GM12878 (cell line): ENCODE measurements at regions of chr10 and their contacts with region 1.

Region 1: DNA sequence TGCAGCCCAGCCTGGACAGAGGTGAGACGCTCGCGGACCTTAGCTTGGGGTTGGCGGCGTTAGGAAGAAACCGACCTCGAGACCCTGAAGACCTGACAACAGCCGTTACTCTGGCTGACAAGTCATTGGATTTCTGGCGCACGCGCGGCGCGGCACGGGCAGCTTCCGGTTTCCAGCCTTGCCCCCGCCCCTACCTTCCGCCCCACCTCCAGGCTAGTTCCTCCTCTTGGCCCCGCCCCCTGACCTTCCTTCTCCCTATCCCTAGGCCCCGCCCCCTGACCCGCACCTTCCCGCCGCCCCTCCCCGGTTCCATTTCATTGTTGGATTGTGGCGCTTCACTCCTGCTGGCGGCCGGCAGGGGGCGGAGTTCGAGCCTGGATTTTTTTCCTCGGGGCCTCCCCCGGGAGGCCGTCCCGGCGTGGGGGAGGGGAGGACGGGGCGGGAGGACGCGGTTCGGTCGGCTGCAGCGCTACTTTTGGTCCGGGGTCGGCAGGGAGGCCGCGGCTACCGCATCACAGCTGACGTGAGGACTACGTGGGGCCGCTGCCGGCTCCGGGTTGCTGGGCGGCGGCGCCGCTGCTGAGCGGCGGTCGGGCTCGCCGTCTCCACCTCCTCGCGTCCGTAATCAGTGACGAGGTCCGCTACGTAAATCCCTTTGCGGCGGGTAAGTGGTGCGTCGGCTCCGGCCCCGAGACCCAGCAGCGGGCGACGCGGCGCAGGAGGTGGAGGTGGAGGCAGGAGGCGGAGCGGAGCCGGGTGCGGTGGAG is at the start of gene CREM:
- DNase-seq: peak; percentile 79
- ATAC-seq: peak; percentile 78
- H3K4me3 ChIP-seq: peak within 1 kb of the TSS; percentile 81
- H3K27ac ChIP-seq: peak within 1 kb of the TSS; percentile 99
- H3K4me1 ChIP-seq: peaks cover 3% of the 10 kb centered on the region; the same call in 1 of the 2 replicates
- H3K27me3 ChIP-seq: no peaks in the 10 kb centered on the region
- CTCF ChIP-seq: peak; percentile 60 to 84 (median 81)
- EP300 ChIP-seq: peak; percentile 90 to 92; a peak in 3 of 4 replicates
- POLR2A ChIP-seq: peak; percentile 97
- RAD21 ChIP-seq: peak; percentile 91
- polyA plus RNA-seq, gene CREM: 64.2 to 70.7 TPM

Region 2: GRCh38 chr10:35184527-35185171 is 57.9 kb after region 1 on chr10:
- CTCF ChIA-PET with region 1: interaction called, 27 read pairs
- POLR2A ChIA-PET with region 1: interaction called, 4 read pairs
- RAD21 ChIA-PET with region 1: interaction called, 15 read pairs
- SMC1A ChIA-PET with region 1: interaction called, 8 read pairs
- in situ Hi-C with region 1: no loop called
- intact Hi-C with region 1: loop called (anchors 2 kb)
- DNase-seq: no peak
- ATAC-seq: peak; percentile 74
- H3K4me3 ChIP-seq: no peak overlapping the region; the same call in 1 of the 2 replicates
- H3K27ac ChIP-seq: peak overlapping the region; percentile 74
- H3K4me1 ChIP-seq: peaks cover 22% of the 10 kb centered on the region
- H3K27me3 ChIP-seq: no peaks in the 10 kb centered on the region
- CTCF ChIP-seq: no peak
- EP300 ChIP-seq: peak in 1 of 2 experiments; percentile 51; a peak in 1 of 4 replicates
- POLR2A ChIP-seq: no peak
- RAD21 ChIP-seq: no peak

Region 3: GRCh38 chr10:35218339-35218955 is 91.7 kb after region 1 on chr10:
- CTCF ChIA-PET with region 1: interaction called, 378 read pairs
- POLR2A ChIA-PET with region 1: interaction called, 10 read pairs
- RAD21 ChIA-PET with region 1: interaction called, 137 read pairs
- SMC1A ChIA-PET with region 1: interaction called, 281 read pairs
- in situ Hi-C with region 1: loop called (anchors 5 kb)
- intact Hi-C with region 1: loop called (anchors 1 kb)
- DNase-seq: peak; percentile 59
- ATAC-seq: peak; percentile 85
- H3K4me3 ChIP-seq: no peak overlapping the region
- H3K27ac ChIP-seq: no peak overlapping the region
- H3K4me1 ChIP-seq: peaks cover 12% of the 10 kb centered on the region
- H3K27me3 ChIP-seq: no peaks in the 10 kb centered on the region
- CTCF ChIP-seq: peak; percentile 64 to 86 (median 79); a peak in 5 of 6 replicates
- EP300 ChIP-seq: no peak
- POLR2A ChIP-seq: no peak
- RAD21 ChIP-seq: peak; percentile 90

Region 4: GRCh38 chr10:35451151-35452016 is 324.7 kb after region 1 on chr10:
- CTCF ChIA-PET with region 1: no interaction called
- POLR2A ChIA-PET with region 1: no interaction called
- RAD21 ChIA-PET with region 1: interaction called, 5 read pairs
- SMC1A ChIA-PET with region 1: no interaction called
- in situ Hi-C with region 1: no loop called
- intact Hi-C with region 1: loop called (anchors 10 kb)
- DNase-seq: peak; percentile 76
- ATAC-seq: peak; percentile 98
- H3K4me3 ChIP-seq: no peak overlapping the region
- H3K27ac ChIP-seq: peak overlapping the region; percentile 61
- H3K4me1 ChIP-seq: peaks cover 35% of the 10 kb centered on the region
- H3K27me3 ChIP-seq: no peaks in the 10 kb centered on the region
- CTCF ChIP-seq: no peak
- EP300 ChIP-seq: 0 out of 4 replicates have a peak, but pooled peaks of 1 of the 2 experiments have one; percentile 11
- POLR2A ChIP-seq: no peak
- RAD21 ChIP-seq: no peak

Region 5: GRCh38 chr10:36888929-36889573 is 1762.3 kb after region 1 on chr10:
- CTCF ChIA-PET with region 1: no interaction called
- POLR2A ChIA-PET with region 1: no interaction called
- RAD21 ChIA-PET with region 1: no interaction called
- SMC1A ChIA-PET with region 1: no interaction called
- in situ Hi-C with region 1: loop called (anchors 10 kb)
- intact Hi-C with region 1: no loop called
- DNase-seq: no peak
- ATAC-seq: peak; percentile 84
- H3K4me3 ChIP-seq: no peak overlapping the region
- H3K27ac ChIP-seq: no peak overlapping the region
- H3K4me1 ChIP-seq: no peaks in the 10 kb centered on the region
- H3K27me3 ChIP-seq: no peaks in the 10 kb centered on the region
- CTCF ChIP-seq: peak; percentile 72 to 77 (median 73)
- EP300 ChIP-seq: no peak
- POLR2A ChIP-seq: no peak
- RAD21 ChIP-seq: peak; percentile 77